Activated T-helper 1 cell treated with anti-CD3 and anti-CD28 coated beads, Interleukin-12 subunit alpha, Interleukin-12 subunit beta, Interleukin-2, Interleukin-4 antibody, amounts not matched to agents 30 ng/mL and 10 ng/mL and 1 ng/mL, durations not matched to agents 14 hours and 24 hours and 36 hours (primary cell): ENCODE measurements at regions of chr7 and their contacts with region 1.

Region 1: GRCh38 chr7:92447345-92448204 is at the start of gene GATAD1:
- DNase-seq: peak; percentile 79
- H3K4me3 Mint-ChIP-seq: peak within 1 kb of the TSS; percentile 89
- H3K27ac Mint-ChIP-seq: peak within 1 kb of the TSS; percentile 92
- H3K4me1 Mint-ChIP-seq: peaks cover 15% of the 10 kb centered on the region
- H3K27me3 Mint-ChIP-seq: no peaks in the 10 kb centered on the region
- total RNA-seq, gene GATAD1: 18.4 and 18.8 TPM in 2 replicates

Region 2: GRCh38 chr7:91264046-91264923 is 1183.3 kb before region 1 on chr7 and contains the start of gene FZD1:
- intact Hi-C with region 1: loop called (anchors 1 kb)
- DNase-seq: peak; percentile 66
- H3K4me3 Mint-ChIP-seq: peak within 1 kb of the TSS; percentile 88
- H3K27ac Mint-ChIP-seq: peak within 1 kb of the TSS; percentile 74
- H3K4me1 Mint-ChIP-seq: no peaks in the 10 kb centered on the region
- H3K27me3 Mint-ChIP-seq: peaks cover 47% of the 10 kb centered on the region
- total RNA-seq, gene FZD1: 0.70 and 0.86 TPM in 2 replicates

Region 3: DNA sequence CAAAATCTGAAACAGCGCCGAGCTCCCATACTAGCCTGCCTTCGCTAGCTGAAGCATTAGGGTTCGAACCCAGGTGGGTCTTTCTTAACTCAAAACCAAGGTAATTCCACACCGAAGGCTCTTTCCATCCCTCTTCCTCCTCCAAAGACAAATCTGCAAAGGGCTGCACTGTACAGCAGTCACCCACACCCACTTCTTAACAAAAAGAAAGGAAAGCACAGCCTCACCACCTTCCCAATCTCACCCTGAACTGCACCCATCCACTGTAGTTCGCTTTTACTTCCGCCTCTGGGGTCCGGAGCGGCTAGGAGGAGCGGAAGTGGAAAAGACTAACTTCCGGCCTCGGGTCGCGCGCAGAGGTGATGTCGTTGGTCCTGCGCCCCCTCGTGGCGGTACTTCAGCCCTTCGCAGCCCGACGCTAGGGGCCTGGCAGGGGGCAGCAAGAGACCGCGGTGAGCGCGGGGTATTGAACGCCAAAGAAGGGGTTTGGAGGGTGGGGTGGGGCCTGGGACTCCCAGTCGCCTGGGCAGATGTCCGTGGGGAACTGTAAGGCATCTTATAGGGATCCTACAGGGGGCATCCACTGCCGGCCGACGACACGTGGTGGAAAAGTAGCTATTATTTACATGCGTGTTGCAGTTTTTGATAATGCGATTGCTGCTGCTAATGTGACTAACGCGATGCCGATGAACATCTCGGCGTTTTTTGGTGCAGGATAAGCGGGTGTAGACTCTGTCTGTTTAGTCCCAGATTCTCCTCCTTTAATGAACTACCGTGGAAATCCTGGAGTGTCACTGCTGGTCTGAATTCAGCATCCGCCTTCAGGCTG is 566.9 kb before region 1 on chr7 and contains the start of gene MTERF1:
- intact Hi-C with region 1: loop called (anchors 1 kb)
- DNase-seq: peak; percentile 85
- H3K4me3 Mint-ChIP-seq: peak within 1 kb of the TSS; percentile 99
- H3K27ac Mint-ChIP-seq: peak within 1 kb of the TSS; percentile 98
- H3K4me1 Mint-ChIP-seq: peaks cover 37% of the 10 kb centered on the region
- H3K27me3 Mint-ChIP-seq: peaks cover 2% of the 10 kb centered on the region
- total RNA-seq, gene MTERF1: 19.3 and 20.4 TPM in 2 replicates

Region 4: DNA sequence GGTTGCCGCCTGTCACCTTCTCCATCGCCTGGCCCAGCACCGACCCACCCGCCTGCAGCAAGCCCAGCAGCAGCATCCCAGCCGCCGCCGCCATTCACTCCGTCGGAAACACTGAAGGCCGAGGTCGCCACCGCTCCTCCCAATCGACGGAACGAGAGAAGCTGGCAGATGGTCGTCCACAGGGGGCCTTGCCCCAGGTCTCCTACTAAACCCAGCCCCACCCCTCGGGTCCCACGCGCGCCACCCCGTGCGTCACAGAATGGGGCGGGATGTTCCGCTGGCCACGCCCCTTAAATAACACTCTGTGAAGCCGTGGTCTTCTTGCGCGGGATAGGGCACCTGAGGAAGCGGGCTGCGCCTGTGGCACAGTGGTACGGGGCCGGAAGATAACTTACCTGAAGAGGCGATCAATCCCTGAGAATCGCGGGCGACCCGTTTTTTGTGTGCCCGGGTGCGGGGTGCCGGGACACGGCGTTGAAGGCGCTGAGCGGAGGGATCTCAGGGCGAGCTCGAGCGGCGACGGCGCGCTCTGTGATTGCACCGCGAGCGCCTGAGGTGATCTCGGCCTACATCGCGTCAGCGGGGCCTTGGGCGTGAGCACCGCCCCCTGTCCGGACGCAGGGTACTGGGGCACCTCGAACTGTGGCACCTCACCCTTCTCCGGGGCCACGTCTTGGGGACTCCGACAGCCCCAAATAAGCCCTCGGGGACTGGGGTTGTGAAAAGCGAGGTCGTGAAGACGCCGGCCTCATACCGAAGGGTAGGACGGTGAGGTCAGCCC is 313.1 kb before region 1 on chr7 and contains the start of gene CYP51A1:
- intact Hi-C with region 1: loop called (anchors 1 kb)
- DNase-seq: peak; percentile 92
- H3K4me3 Mint-ChIP-seq: peak within 1 kb of the TSS; percentile 98
- H3K27ac Mint-ChIP-seq: peak within 1 kb of the TSS; percentile 97
- H3K4me1 Mint-ChIP-seq: peaks cover 44% of the 10 kb centered on the region
- H3K27me3 Mint-ChIP-seq: no peaks in the 10 kb centered on the region
- total RNA-seq, gene CYP51A1: 96.9 and 102 TPM in 2 replicates

Region 5: GRCh38 chr7:92228100-92228499 is 219.5 kb before region 1 on chr7:
- intact Hi-C with region 1: loop called (anchors 5 kb)
- DNase-seq: no peak
- H3K4me3 Mint-ChIP-seq: no peak overlapping the region
- H3K27ac Mint-ChIP-seq: peak overlapping the region; percentile 81
- H3K4me1 Mint-ChIP-seq: peaks cover 24% of the 10 kb centered on the region
- H3K27me3 Mint-ChIP-seq: no peaks in the 10 kb centered on the region

Region 6: DNA sequence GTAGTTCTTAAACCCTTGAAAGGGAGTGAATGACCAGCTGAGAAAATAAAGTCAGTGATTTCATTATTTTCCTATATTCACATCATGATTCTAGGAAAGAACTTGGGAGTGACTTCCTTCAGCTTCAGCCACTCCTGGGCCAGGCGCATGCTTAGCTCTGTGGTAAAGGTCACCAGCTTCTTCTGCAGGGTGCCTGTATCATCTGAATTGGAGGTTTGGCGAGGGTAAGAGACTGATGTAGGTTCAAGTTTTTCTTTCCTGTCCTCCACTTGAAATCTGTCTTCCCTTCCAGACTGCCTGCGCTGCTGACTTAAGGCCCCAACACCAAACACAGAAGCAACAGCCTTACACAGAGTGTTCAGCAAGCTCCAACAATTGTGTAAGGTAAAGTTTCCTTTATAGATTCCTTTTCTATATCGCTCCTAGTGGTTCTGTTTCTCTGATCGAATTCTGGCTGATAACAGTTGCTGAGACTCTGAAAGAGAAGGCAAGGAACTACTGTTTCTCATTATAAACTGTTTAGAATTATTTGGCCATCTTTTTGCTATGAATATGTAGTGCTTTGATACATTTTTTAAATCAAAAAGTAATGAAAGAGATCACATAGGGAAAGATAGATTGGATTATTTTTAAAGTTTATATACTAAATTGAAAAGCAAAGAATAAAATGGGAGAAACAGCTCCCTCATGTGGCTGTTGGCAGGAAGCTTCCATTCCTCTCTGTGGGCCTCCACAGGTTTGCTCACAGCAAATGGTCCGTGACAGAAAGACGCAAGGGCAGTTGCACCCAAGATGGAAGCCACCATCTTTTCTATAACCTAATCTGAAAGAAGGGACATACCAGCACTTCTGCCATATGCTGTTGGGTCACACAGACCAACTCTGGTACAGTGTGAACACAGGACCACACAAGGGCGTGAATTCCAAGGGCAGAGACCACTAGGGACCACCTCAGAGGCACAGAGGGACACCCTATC is 13.7 kb after region 1 on chr7:
- intact Hi-C with region 1: loop called (anchors 1 kb)
- DNase-seq: peak; percentile 6
- H3K4me3 Mint-ChIP-seq: no peak overlapping the region
- H3K27ac Mint-ChIP-seq: no peak overlapping the region
- H3K4me1 Mint-ChIP-seq: no peaks in the 10 kb centered on the region
- H3K27me3 Mint-ChIP-seq: no peaks in the 10 kb centered on the region

Region 7: DNA sequence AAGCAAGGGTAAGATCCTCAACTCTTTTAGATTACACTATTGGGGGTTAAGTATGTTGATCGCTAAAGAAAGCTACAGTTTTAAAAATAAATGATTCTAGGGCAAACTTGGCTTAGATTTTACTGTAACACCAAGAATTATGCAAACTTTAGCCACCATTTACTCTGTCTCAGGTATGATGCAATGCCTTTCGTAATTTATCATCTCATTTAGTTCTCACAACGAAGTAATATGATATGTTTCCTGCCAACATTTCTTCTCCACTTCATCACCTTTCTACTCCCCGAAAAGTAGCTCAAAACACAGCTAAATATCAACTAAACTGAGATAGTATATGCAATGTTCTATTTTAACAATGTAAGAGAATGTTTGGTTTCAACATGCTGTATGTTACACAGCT is 121.6 kb after region 1 on chr7:
- intact Hi-C with region 1: no loop called
- DNase-seq: no peak
- H3K4me3 Mint-ChIP-seq: no peak overlapping the region
- H3K27ac Mint-ChIP-seq: no peak overlapping the region
- H3K4me1 Mint-ChIP-seq: peaks cover 2% of the 10 kb centered on the region
- H3K27me3 Mint-ChIP-seq: no peaks in the 10 kb centered on the region

Region 8: DNA sequence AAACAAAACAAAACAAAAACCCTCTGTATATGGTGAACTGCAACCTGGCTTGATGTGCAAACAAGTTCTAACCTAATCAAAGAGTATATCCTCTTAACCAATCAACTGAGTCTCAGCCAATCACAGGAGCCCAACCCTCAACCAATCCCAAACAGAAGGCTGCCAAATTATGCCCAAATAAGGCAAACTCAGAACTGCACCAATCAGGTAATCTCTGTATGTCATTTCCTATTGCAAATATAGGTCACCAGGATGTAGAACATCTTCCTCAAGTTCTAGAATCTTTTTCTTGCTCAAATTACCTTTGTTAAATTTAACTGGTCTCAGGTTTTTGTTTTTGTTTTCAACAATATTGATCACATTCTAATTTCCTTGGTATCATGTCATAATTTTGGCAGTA is 137.4 kb after region 1 on chr7:
- intact Hi-C with region 1: loop called (anchors 5 kb)
- DNase-seq: no peak
- H3K4me3 Mint-ChIP-seq: no peak overlapping the region
- H3K27ac Mint-ChIP-seq: no peak overlapping the region
- H3K4me1 Mint-ChIP-seq: peaks cover 70% of the 10 kb centered on the region
- H3K27me3 Mint-ChIP-seq: no peaks in the 10 kb centered on the region